Posterior cingulate gyrus (tissue), 11 donors: ENCODE measurements at regions of chr14 and their contacts with region 1.

Region 1: DNA sequence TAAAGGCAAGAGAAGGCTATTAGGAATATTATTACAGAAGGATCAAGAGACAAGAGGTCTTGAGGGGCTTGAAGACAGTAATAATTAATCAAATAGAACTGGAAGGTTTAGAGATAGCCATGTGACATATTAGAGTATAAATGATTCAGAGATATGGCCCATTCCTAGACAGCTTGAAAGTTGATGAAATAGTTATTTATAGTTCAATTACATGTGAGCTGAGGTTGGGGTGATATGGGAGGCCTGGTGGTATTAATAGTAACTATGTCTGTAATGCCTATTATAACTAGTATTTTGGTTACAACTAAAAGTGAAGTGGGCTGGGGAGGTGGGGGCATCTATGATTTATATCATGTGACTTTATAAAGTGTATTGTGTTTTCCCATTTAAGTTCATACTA is 14.1 kb upstream of the MIS18BP1 start:
- DNase-seq: no peak

Region 2: GRCh38 chr14:44912041-44912869 is 354.8 kb before region 1 on chr14:
- intact Hi-C with region 1: loop called (anchors 2 kb)
- DNase-seq: peak in 2 of 10 donors; percentile 74 to 80